Activated CD4-positive, alpha-beta T cell treated with anti-CD3 and anti-CD28 coated beads for 36 hours (primary cell): ENCODE measurements at regions of chr14 and their contacts with region 1.

Region 1: GRCh38 chr14:69242311-69243224 is 17.4 kb upstream of the GALNT16 start:
- DNase-seq: peak; percentile 70
- ATAC-seq: peak; percentile 86
- H3K4me3 Mint-ChIP-seq: no peak overlapping the region
- H3K27ac Mint-ChIP-seq: no peak overlapping the region
- H3K4me1 Mint-ChIP-seq: no peaks in the 10 kb centered on the region
- H3K27me3 Mint-ChIP-seq: no peaks in the 10 kb centered on the region

Region 2: GRCh38 chr14:69232388-69232787 is 10.2 kb before region 1 on chr14:
- CTCF ChIA-PET with region 1: interaction called, 20 read pairs
- POLR2A ChIA-PET with region 1: no interaction called
- intact Hi-C with region 1: no loop called
- DNase-seq: no peak
- ATAC-seq: no peak
- H3K4me3 Mint-ChIP-seq: no peak overlapping the region
- H3K27ac Mint-ChIP-seq: no peak overlapping the region
- H3K4me1 Mint-ChIP-seq: peaks cover 5% of the 10 kb centered on the region
- H3K27me3 Mint-ChIP-seq: no peaks in the 10 kb centered on the region

Region 3: GRCh38 chr14:69252851-69253250 is 10.3 kb after region 1 on chr14:
- CTCF ChIA-PET with region 1: interaction called, 19 read pairs
- POLR2A ChIA-PET with region 1: no interaction called
- intact Hi-C with region 1: no loop called
- DNase-seq: no peak
- ATAC-seq: no peak
- H3K4me3 Mint-ChIP-seq: no peak overlapping the region
- H3K27ac Mint-ChIP-seq: no peak overlapping the region
- H3K4me1 Mint-ChIP-seq: no peaks in the 10 kb centered on the region
- H3K27me3 Mint-ChIP-seq: peaks cover 13% of the 10 kb centered on the region

Region 4: DNA sequence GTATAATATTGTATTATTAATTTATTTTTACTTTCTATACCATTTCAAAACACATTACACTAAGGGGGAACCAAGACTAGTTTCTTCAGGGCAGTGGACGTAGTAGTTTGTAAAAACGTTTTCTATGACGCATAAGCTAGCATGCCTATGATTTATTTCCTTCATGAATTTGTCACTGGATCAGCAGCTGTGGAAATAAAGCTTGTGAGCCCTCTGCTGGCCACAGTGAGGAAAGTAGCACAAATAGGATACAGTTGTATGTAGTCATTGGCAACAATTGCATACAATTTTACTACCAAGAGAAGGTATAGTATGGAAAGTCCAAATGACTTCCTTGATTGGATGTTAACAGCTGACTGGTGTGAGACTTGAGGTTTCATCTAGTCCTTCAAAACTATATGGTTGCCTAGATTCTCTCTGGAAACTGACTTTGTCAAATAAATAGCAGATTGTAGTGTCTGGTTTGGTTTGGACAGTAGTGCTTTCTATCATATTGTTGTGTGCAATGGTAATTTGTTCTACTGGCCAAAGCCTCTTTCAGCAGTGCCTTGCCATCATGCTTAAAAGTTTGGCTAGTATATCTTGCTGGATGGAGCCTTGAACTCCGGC is 217.6 kb after region 1 on chr14:
- CTCF ChIA-PET with region 1: interaction called, 73 read pairs
- POLR2A ChIA-PET with region 1: no interaction called
- intact Hi-C with region 1: loop called (anchors 1 kb)
- DNase-seq: peak; percentile 79
- ATAC-seq: peak; percentile 93
- H3K4me3 Mint-ChIP-seq: no peak overlapping the region
- H3K27ac Mint-ChIP-seq: no peak overlapping the region
- H3K4me1 Mint-ChIP-seq: no peaks in the 10 kb centered on the region
- H3K27me3 Mint-ChIP-seq: no peaks in the 10 kb centered on the region